GM12878 (cell line): ENCODE measurements at regions of chr14 and their contacts with region 1.

Region 1: DNA sequence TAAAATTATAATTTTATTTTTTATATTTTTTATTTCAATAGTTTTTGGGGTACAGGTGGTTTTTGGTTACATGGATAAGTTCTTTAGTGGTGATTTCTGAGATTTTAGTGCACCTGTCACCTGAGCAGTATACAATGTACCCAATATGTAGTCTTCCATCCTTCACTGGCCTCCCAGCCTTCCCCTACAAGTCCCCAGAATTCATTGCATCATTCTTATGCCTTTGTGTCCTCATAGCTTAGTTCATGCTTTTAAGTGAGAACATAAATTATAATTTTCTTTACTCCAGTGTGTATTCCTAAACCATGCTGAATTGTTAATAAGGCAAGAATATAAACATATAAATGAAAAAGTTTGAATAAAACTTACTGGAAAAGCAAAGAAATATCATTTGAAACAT is 19.1 kb upstream of the NFKBIA start:
- DNase-seq: no peak
- ATAC-seq: no peak
- H3K4me3 ChIP-seq: no peak overlapping the region
- H3K27ac ChIP-seq: no peak overlapping the region
- H3K4me1 ChIP-seq: no peaks in the 10 kb centered on the region
- H3K27me3 ChIP-seq: no peaks in the 10 kb centered on the region
- CTCF ChIP-seq: no peak
- EP300 ChIP-seq: no peak
- POLR2A ChIP-seq: no peak
- RAD21 ChIP-seq: no peak

Region 2: DNA sequence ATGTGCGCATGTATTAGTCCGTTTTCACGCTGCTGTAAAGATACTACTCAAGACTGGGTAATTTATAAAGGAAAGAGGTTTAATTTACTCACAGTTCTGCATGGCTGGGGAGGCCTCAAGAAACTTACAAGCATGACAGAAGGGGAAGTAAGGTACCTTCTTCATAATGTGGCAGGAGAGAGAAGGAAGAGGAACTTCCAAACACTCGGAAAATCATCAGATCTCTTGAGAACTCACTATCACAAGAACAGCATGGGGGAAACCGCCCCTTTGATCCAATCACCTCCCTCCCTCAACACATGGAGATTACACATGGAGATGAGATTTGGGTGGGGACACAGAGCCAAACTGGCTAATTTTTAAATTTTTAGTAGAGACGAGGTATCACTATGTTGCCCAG is 751.9 kb before region 1 on chr14:
- CTCF ChIA-PET with region 1: interaction called, 10 read pairs
- POLR2A ChIA-PET with region 1: no interaction called
- RAD21 ChIA-PET with region 1: no interaction called
- SMC1A ChIA-PET with region 1: interaction called, 6 read pairs
- in situ Hi-C with region 1: no loop called
- intact Hi-C with region 1: loop called (anchors 5 kb)
- DNase-seq: no peak
- ATAC-seq: no peak
- H3K4me3 ChIP-seq: no peak overlapping the region
- H3K27ac ChIP-seq: no peak overlapping the region
- H3K4me1 ChIP-seq: no peaks in the 10 kb centered on the region
- H3K27me3 ChIP-seq: no peaks in the 10 kb centered on the region
- CTCF ChIP-seq: no peak
- EP300 ChIP-seq: no peak
- POLR2A ChIP-seq: no peak
- RAD21 ChIP-seq: no peak